Naive thymus-derived CD4-positive, alpha-beta T cell (primary cell): ENCODE measurements at regions of chr6 and their contacts with region 1.

Region 1: DNA sequence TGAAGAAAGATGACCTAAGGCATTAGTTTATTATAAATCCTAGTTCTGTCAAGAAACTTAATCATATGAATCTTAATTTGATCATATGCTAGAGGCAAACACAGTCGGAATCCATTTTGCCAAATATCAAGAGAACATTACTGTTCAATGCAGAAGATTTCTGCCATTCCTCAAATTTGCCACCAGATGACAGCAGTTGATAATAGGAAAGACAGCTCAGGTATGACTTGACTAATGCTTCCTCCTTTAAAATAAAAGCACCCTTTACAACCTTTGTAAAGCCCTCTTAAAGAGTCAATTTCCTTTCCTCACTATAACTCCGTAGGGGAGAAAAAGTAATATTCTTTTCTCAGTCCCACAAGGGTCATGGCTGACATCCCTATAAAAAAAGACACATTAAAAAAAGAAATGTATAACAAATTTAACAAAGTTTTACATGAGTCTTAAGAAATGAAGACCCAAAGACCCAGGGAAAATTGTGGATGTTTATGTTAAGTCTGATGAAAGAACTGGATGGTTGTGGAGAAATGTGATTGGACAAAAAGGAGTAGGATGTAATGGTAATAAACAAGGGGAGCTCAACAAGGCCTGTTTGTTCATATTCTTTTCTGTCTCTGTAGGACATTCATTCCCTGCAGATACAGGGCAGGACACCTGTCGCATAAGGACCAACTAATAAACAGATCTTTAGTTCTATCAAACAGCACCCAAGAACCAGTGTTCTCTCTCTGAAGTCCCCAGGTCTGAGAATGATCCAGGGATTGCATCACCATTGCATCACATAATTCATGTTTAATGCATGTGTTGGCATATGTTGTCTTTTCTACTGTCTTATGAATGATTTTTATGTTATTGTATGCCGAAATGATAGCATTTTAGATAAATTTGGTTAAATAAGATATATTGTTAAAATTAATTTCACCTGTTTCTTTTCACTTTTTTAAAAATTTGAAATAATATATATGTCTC is 23.0 kb upstream of the IL17A start:
- DNase-seq: peak in 7 of 9 donors; percentile 5 to 49 (median 37)
- ATAC-seq: peak; percentile 62
- H3K4me3 ChIP-seq: no peak overlapping the region
- H3K4me3 Mint-ChIP-seq: no peak overlapping the region
- H3K27ac ChIP-seq: no peak overlapping the region
- H3K27ac Mint-ChIP-seq: peak overlapping the region in 1 of 9 donors; percentile 19
- H3K4me1 ChIP-seq: no peaks in the 10 kb centered on the region
- H3K4me1 Mint-ChIP-seq: peaks cover 0 to 9% (median 0%) of the 10 kb centered on the region in 7 donors
- H3K27me3 ChIP-seq: no peaks in the 10 kb centered on the region
- H3K27me3 Mint-ChIP-seq: peaks cover 6 to 26% (median 17%) of the 10 kb centered on the region in 5 donors

Region 2: DNA sequence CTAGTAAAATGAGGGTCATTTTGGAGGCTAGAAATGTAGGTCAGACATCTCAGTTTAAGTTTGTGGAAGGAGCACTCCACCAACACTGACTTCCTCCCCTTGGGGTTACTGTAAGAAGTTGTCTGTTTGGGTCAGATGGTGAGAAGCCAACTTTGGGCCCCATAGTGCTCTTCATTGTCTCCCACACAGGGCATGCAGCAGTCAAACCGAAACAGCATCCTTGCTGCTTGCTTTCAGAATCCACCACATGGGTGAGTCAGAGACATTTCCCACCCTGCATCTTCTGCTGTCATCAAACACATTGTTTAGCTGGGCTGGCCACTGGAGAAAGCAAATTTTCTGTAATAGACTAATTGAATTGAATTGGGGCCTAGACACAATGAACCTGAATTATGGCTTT is 64.3 kb after region 1 on chr6:
- CTCF ChIA-PET with region 1: no interaction called
- POLR2A ChIA-PET with region 1: no interaction called
- intact Hi-C with region 1: loop called in 1 of 2 experiments (anchors 2 kb)
- DNase-seq: peak in 1 of 9 donors; percentile 68
- ATAC-seq: no peak
- H3K4me3 ChIP-seq: no peak overlapping the region
- H3K4me3 Mint-ChIP-seq: peak overlapping the region in 1 of 10 donors; percentile 31
- H3K27ac ChIP-seq: no peak overlapping the region
- H3K27ac Mint-ChIP-seq: peak overlapping the region in 1 of 9 donors; percentile 60
- H3K4me1 ChIP-seq: peaks cover 0 to 4% of the 10 kb centered on the region in 2 donors
- H3K4me1 Mint-ChIP-seq: peaks cover 0 to 42% (median 3%) of the 10 kb centered on the region in 7 donors
- H3K27me3 ChIP-seq: peaks cover 0 to 4% of the 10 kb centered on the region in 2 donors
- H3K27me3 Mint-ChIP-seq: peaks cover 0 to 50% (median 3%) of the 10 kb centered on the region in 5 donors

Region 3: GRCh38 chr6:52233975-52234823 is 71.0 kb after region 1 on chr6:
- CTCF ChIA-PET with region 1: no interaction called
- POLR2A ChIA-PET with region 1: no interaction called
- intact Hi-C with region 1: loop called in 1 of 2 experiments (anchors 1 kb)
- DNase-seq: no peak
- ATAC-seq: no peak
- H3K4me3 ChIP-seq: no peak overlapping the region
- H3K4me3 Mint-ChIP-seq: no peak overlapping the region
- H3K27ac ChIP-seq: no peak overlapping the region
- H3K27ac Mint-ChIP-seq: no peak overlapping the region
- H3K4me1 ChIP-seq: peaks cover 0 to 4% of the 10 kb centered on the region in 2 donors
- H3K4me1 Mint-ChIP-seq: peaks cover 0 to 25% (median 0%) of the 10 kb centered on the region in 7 donors
- H3K27me3 ChIP-seq: peaks cover 0 to 4% of the 10 kb centered on the region in 2 donors
- H3K27me3 Mint-ChIP-seq: peaks cover 8 to 74% (median 11%) of the 10 kb centered on the region in 5 donors